ENCODE measurements at regions of chr1 and their contacts with region 1.

Region 1: GRCh38 chr1:227459977-227460376 is 103.4 kb upstream of the ZNF678 start:
- DNase-seq: no peak

Region 2: DNA sequence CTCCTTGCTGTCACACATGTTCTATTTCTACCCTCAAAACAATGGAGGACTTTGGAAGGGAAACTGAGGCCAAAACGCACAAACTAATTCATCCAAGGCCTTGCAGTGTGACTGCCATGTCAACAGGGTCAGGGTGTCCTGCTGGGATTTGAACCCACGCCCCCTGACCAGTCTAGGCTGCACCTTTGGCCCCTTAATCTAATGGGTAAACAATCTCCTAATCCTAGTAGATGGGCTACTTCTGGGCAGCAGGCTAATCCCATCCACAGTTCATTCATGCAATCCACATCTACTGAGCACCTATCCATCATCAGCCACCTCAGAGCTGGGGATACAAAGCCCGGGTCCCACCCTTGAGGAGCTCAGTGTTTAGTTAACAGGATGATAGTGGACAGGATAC is 1501.9 kb before region 1 on chr1:
- intact Hi-C with region 1: loop called in 1 of 2 experiments (anchors 5 kb)
- DNase-seq: no peak

Region 3: GRCh38 chr1:226763905-226764264 is 696.1 kb before region 1 on chr1:
- intact Hi-C with region 1: loop called in 1 of 2 experiments (anchors 10 kb)
- DNase-seq: no peak

Measured in posterior vena cava (tissue), 2 donors.